ENCODE measurements at regions of chr17 and their contacts with region 1.

Region 1: GRCh38 chr17:75405365-75406221 is at the start of gene GRB2:
- DNase-seq: peak; percentile 99
- ATAC-seq: peak; percentile 99
- total RNA-seq, gene GRB2: 90.4 TPM

Region 2: DNA sequence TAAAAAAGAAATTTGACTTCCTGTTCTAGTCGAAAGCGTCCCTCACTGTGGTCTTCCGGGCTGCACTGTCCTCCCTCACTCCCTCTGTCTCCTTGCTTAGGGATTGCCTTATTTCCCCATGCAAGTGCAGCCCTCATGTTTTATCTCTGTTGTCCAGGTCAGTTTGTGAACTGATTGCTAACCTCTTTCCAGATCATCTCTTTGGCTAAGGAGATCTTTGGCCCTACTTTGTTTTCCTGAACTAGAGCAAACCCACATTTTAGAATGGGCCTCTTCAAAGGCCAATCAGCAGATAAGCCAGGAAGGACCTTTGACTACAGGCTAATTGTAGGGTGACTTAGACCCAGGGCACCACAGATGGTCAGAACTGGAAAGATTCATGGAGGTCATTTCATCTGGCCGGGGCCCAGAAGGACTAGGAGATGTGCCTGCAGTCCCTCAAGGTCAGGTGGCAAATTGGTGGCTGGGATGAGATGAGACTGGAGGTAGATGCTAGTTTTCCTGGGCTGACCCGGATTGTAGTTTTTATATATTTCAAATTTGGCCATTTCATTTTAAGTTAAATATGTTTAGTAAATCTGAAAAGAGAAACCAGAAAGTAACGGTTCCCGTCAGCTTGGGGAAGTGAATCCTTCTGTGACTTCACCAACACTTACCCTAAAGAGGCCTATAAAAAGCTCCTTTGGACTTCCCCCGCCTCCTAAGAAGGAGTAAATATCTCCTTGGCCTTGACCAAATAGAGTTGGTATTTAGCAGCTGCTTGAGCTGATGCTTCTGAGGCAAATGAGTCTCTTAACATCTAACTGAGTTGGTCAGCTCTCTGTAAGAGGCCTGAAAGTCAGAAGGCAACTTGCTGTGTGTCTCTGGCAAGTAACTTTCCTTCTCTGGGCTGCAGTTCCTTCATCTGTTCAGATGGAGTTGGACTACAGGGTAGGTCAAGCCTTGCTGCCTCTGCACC is 110.1 kb before region 1 on chr17:
- intact Hi-C with region 1: no loop called
- DNase-seq: no peak
- ATAC-seq: peak; percentile 58

Region 3: DNA sequence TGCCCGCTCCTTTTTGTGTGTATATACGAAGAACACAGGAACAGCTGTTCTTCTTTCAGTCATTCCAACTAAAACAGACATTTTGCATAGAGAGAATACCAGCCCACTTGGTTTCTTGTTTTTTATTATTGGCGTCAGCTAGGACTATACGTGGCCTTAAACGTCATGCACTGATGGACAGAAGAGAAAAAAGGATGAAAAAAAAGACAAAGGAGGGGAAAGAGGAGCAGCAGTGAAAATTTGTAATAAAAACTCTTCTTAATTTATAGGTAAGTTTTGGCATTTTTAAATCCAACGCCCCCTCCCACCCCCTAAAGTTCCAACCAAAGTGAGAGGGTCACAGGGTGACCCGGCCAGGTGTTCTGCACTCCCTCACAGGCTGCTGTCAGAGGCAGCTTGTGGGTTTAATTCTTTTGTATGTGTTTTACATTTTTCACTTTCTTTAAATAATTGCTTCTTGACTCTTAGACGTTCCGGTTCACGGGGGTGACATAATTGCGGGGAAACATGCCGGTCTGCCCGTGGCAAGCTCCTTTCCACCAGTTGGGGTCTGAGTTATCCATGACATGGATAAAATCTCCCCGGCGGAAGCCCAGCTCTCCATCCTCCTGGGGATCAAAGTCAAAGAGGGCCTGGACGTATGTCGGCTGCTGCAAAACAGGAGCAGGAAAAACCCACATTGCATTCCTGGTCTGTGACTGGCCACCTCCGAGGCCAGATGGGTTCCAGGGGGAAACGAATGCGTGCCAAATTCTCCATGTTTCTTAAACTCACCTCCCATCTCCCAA is 85.5 kb before region 1 on chr17:
- intact Hi-C with region 1: loop called (anchors 5 kb)
- DNase-seq: no peak
- ATAC-seq: no peak

Region 4: DNA sequence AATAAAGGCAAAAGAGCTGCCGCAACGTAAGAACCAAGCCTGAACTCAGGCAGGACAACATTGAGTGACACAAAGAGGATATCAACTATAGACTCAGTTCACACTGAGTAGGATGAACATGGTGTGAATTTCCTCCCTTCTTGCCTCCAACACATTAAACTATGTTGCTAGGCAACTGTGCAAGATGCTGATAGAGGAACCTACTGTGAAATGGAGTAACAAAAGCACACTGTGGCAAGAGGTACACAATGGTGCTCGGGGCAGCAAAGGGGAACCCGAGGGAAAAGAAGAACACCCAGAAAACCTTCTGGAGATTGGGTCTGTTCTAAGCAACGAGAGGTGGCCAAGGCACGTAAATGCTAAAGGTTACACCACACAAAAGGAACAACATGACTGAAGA is 34.3 kb before region 1 on chr17:
- intact Hi-C with region 1: loop called (anchors 1 kb)
- DNase-seq: no peak
- ATAC-seq: no peak

Region 5: GRCh38 chr17:75417054-75417580 is 11.5 kb after region 1 on chr17:
- intact Hi-C with region 1: no loop called
- DNase-seq: no peak
- ATAC-seq: no peak

Region 6: DNA sequence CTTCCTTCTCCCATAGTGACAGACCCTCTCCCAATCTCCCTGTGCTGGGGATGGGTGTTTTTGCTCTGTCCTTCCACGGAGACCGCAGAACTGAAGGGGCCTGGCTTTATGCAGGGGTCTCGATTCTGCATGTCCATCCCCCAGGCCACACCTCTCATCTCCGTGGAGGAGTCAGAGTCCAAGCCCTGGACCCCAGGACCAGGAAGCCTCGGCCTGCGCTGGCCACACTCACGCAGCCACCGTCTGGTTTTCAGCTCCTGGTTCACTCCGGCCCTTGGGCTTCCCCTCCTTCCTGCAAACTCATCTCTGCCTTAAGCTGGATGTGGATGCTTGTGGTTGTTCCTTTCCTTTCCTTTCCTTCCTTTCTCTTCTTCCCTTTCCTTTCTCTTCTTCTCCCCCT is 1553.4 kb after region 1 on chr17:
- intact Hi-C with region 1: no loop called
- DNase-seq: no peak
- ATAC-seq: no peak